ENCODE measurements at regions of chr12 and their contacts with region 1.

Region 1: DNA sequence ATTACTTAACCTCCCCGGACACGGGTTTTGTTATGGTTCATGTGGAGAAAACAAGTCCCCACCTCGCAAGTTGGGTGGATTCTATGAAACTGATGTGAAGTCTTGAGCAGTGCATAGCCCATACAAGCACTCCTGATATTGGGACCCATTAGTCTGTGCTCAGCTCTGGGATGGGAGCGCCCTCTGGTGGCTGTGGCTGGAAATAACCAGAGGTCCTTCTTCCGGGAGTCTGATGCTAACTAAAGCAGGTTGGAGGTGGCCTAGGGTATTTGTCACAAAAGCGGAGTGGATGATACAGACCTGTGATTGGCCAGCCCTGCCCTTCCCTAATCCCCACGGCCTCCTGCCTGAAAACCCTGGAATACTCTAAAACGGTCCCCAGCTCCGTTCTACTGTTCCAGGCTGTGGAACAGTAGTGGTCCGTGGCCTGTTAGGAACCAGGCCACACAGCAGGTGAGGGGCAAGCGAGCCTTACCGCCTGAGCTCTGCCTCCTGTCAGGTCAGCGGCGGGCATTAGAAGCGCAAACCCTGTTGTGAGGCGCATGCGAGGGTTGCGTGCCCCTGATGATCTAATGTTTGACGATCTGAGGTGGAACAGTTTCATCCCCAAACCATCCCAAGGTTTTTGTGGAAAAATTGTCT is 6.4 kb downstream of the SLC48A1 start:
- DNase-seq: peak; percentile 69
- ATAC-seq: peak; percentile 87
- H3K4me3 ChIP-seq: no peak overlapping the region
- H3K27ac ChIP-seq: no peak overlapping the region
- H3K4me1 ChIP-seq: peaks cover 23% of the 10 kb centered on the region
- H3K27me3 ChIP-seq: no peaks in the 10 kb centered on the region
- CTCF ChIP-seq: peak; percentile 93
- EP300 ChIP-seq: no peak
- POLR2A ChIP-seq: no peak
- RAD21 ChIP-seq: peak; percentile 90

Region 2: DNA sequence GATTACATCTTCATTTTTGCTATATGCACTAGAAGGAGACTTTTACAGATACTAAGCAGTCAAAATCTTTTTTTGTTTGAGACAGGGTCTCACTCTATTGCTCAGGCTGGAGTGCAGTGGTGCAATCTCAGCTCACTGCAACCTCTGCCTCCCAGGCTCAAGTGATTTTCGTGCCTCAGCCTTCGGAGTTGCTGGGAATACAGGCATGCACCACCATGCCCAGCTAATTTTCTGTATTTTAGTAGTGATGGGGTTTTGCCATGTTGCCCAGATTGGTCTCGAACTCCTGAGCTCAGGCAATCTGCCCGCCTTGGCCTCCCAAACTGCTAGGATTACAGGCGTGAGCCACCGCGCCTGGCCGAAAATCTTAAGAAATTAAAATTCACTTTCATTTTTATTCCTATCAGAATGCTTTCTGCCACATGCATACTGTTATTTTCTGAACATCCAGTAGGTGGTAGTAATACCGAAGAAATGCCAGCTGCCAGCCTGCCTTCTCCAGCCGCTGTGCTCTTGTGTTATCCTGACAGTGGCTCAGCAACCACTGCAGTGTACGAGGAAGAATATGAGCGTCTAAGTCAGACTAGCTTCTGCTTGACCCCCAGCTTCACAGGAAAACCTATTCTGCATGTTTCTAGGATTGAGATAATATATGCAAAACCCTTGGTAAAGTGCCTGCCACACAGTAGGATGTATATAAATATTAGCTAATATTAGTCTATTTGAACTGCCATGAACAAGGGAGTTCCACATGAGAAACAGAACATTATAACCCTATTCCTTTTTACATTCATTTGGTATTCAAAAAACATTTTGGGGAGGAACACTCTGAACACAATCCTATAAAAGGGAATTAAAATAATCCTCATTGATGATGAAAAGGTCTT is 127.8 kb before region 1 on chr12:
- CTCF ChIA-PET with region 1: no interaction called
- POLR2A ChIA-PET with region 1: no interaction called
- in situ Hi-C with region 1: no loop called
- intact Hi-C with region 1: loop called (anchors 5 kb)
- DNase-seq: peak; percentile 64
- ATAC-seq: peak; percentile 84
- H3K4me3 ChIP-seq: peak overlapping the region in 1 of 3 experiments; percentile 44; a peak in 2 of 6 replicates
- H3K27ac ChIP-seq: peak overlapping the region; percentile 73
- H3K4me1 ChIP-seq: peaks cover 27% of the 10 kb centered on the region
- H3K27me3 ChIP-seq: no peaks in the 10 kb centered on the region
- CTCF ChIP-seq: peak; percentile 85
- EP300 ChIP-seq: no peak
- POLR2A ChIP-seq: no peak
- RAD21 ChIP-seq: peak; percentile 62; the same call in 1 of the 2 replicates

Region 3: GRCh38 chr12:47715393-47715876 is 64.0 kb before region 1 on chr12:
- CTCF ChIA-PET with region 1: interaction called, 56 read pairs
- POLR2A ChIA-PET with region 1: no interaction called
- in situ Hi-C with region 1: loop called (anchors 5 kb)
- intact Hi-C with region 1: loop called (anchors 1 kb)
- DNase-seq: peak; percentile 76
- ATAC-seq: peak; percentile 75
- H3K4me3 ChIP-seq: no peak overlapping the region
- H3K27ac ChIP-seq: no peak overlapping the region
- H3K4me1 ChIP-seq: peaks cover 12% of the 10 kb centered on the region
- H3K27me3 ChIP-seq: no peaks in the 10 kb centered on the region; a peak in 1 of 5 replicates
- CTCF ChIP-seq: peak; percentile 87
- EP300 ChIP-seq: no peak
- POLR2A ChIP-seq: no peak
- RAD21 ChIP-seq: peak; percentile 62

Region 4: DNA sequence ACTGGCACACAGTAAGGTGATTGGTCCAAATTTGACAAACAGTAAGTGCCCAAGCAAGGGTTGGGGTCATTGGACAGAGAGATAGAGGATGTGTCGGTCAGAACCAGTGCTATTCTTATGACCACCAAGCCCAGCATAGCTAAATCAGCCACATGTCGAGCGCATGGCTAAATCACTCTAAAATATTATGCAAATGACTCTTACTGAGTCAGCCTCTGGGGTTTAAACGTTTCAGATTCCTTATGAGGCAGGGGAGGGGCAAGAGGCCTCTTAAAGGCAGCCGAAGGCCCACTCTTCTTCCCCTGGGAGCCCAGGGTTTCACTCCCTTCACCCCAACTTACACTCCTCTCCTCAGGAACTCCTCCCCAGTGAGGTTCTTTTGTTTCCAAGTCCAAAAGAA is 53.5 kb before region 1 on chr12:
- CTCF ChIA-PET with region 1: no interaction called
- POLR2A ChIA-PET with region 1: no interaction called
- in situ Hi-C with region 1: no loop called
- intact Hi-C with region 1: no loop called
- DNase-seq: no peak
- ATAC-seq: no peak
- H3K4me3 ChIP-seq: no peak overlapping the region
- H3K27ac ChIP-seq: no peak overlapping the region
- H3K4me1 ChIP-seq: no peaks in the 10 kb centered on the region
- H3K27me3 ChIP-seq: no peaks in the 10 kb centered on the region
- CTCF ChIP-seq: no peak
- EP300 ChIP-seq: no peak
- POLR2A ChIP-seq: no peak
- RAD21 ChIP-seq: no peak

Region 5: GRCh38 chr12:47811581-47812484 is 32.4 kb after region 1 on chr12:
- CTCF ChIA-PET with region 1: no interaction called
- POLR2A ChIA-PET with region 1: no interaction called
- in situ Hi-C with region 1: no loop called
- intact Hi-C with region 1: no loop called
- DNase-seq: no peak
- ATAC-seq: no peak
- H3K4me3 ChIP-seq: 0 out of 6 replicates have a peak overlapping the region, but pooled peaks of 1 of the 3 experiments have one; percentile 55
- H3K27ac ChIP-seq: no peak overlapping the region
- H3K4me1 ChIP-seq: peaks cover 8% of the 10 kb centered on the region
- H3K27me3 ChIP-seq: no peaks in the 10 kb centered on the region
- CTCF ChIP-seq: no peak
- EP300 ChIP-seq: no peak
- POLR2A ChIP-seq: no peak
- RAD21 ChIP-seq: no peak